ENCODE measurements at regions of chr11 and their contacts with region 1.

Region 1: DNA sequence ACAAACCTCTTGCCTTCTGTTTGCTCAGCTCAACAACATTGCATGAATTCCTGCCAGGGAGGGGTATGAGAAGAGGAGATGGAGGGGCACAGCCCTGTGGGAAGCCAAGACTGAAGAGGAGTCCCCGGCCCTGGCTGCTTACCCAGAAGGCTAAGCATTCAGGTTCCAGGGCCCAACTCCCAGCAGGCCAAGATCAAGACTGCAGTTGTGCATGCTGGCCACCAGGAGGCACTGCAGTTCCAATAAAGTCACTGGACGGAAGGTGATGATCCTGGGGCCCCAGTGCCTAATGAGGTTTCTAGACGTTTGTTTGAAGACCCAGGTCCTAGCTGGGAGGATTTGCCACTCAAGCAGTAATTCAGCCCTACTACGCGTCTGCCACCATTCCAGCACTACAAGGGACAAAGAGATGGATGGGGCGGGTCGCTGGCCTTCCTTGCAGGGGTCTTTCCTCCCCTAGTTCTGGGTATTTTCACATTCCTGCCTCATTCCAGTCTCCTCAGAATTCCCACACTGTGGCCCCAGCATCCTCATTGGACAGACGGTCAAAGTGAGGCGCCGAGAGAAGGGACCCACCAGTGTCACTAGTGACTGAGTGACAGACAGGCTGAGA is 23.6 kb downstream of the ALX4 start:
- DNase-seq: peak; percentile 85 to 86 (median 86)
- ATAC-seq: peak; percentile 94
- H3K4me3 ChIP-seq: no peak overlapping the region
- H3K27ac ChIP-seq: no peak overlapping the region
- H3K4me1 ChIP-seq: peaks cover 7 to 13% of the 10 kb centered on the region in 2 experiments; a peak in 4 of 5 replicates
- H3K27me3 ChIP-seq: no peaks in the 10 kb centered on the region
- CTCF ChIP-seq: peak; percentile 93 to 97 (median 95)
- EP300 ChIP-seq: no peak; the same call in 1 of the 2 replicates
- POLR2A ChIP-seq: no peak
- RAD21 ChIP-seq: peak; percentile 96 to 98

Region 2: DNA sequence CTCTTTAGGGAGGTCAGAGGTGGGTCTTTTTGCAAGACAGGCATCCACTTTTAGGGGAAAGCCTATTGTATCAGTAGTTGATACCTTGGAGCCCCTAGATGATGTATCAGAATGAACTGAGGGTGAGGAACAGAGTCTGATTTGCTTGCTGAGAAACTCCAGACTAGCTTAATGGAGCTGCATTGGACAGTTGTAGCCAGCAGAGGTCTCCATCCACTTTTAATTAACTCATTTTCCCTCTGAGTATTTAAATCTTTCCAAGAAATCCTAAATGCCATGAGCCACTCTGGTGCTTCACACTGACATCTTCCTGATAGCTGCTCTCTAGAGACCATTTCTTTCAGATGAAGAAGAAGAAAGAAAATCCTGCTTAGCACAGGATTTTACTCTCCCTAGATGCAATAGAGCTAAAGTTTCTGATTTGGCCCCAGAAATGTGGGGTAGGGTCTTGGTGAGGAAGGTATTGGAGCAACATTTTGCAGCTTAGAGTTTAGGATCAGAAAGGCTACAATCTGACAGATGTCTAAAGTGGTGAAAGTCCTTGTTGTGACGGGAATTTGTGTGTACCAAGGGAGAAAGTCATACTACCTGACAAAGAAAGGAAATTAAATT is 152.9 kb before region 1 on chr11:
- CTCF ChIA-PET with region 1: interaction called, 3 read pairs
- POLR2A ChIA-PET with region 1: no interaction called
- in situ Hi-C with region 1: no loop called
- intact Hi-C with region 1: loop called (anchors 5 kb)
- DNase-seq: peak; percentile 32 to 48 (median 36)
- ATAC-seq: peak; percentile 83
- H3K4me3 ChIP-seq: no peak overlapping the region
- H3K27ac ChIP-seq: no peak overlapping the region
- H3K4me1 ChIP-seq: peaks cover 0 to 2% of the 10 kb centered on the region in 2 experiments; a peak in 1 of 5 replicates
- H3K27me3 ChIP-seq: no peaks in the 10 kb centered on the region
- CTCF ChIP-seq: peak; percentile 43 to 76 (median 72)
- EP300 ChIP-seq: no peak
- POLR2A ChIP-seq: no peak
- RAD21 ChIP-seq: peak; percentile 73 to 81

Region 3: DNA sequence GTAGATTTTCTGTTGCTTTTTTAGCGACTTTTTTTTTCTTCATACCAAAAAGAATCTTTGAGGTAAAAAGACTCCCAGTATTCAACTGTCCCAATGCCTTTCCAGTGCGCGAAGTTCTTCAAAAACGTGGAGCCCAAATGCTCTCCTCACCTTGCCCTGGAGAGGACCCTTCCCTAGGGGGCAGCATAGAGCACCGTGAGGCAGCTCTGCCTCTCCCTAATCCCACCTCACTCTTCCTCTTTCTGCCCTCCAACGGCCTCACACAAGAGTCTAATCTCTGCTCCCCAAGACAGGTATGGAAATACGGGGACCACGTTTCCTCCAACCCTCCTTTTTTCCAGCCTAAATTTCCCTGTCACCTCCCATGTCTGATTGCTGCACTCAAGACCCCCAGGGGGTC is 141.1 kb after region 1 on chr11:
- CTCF ChIA-PET with region 1: no interaction called
- POLR2A ChIA-PET with region 1: no interaction called
- in situ Hi-C with region 1: no loop called
- intact Hi-C with region 1: loop called (anchors 10 kb)
- DNase-seq: peak; percentile 64 to 77 (median 72)
- ATAC-seq: peak; percentile 96
- H3K4me3 ChIP-seq: no peak overlapping the region
- H3K27ac ChIP-seq: no peak overlapping the region
- H3K4me1 ChIP-seq: no peaks in the 10 kb centered on the region; a peak in 1 of 5 replicates
- H3K27me3 ChIP-seq: peaks cover 29 to 42% of the 10 kb centered on the region in 2 experiments; a peak in 4 of 5 replicates
- CTCF ChIP-seq: peak; percentile 73 to 84 (median 78)
- EP300 ChIP-seq: no peak
- POLR2A ChIP-seq: no peak
- RAD21 ChIP-seq: peak; percentile 19 to 36; a peak in 3 of 4 replicates

Region 4: GRCh38 chr11:44538375-44539054 is 252.1 kb after region 1 on chr11:
- CTCF ChIA-PET with region 1: interaction called, 17 read pairs
- POLR2A ChIA-PET with region 1: interaction called, 5 read pairs
- in situ Hi-C with region 1: loop called (anchors 5 kb)
- intact Hi-C with region 1: loop called (anchors 1 kb)
- DNase-seq: peak; percentile 85 to 88 (median 87)
- ATAC-seq: peak; percentile 95
- H3K4me3 ChIP-seq: no peak overlapping the region
- H3K27ac ChIP-seq: no peak overlapping the region
- H3K4me1 ChIP-seq: peaks cover 16 to 29% of the 10 kb centered on the region in 2 experiments
- H3K27me3 ChIP-seq: no peaks in the 10 kb centered on the region
- CTCF ChIP-seq: peak; percentile 92 to 95 (median 95)
- EP300 ChIP-seq: no peak
- POLR2A ChIP-seq: no peak
- RAD21 ChIP-seq: peak; percentile 99

Region 5: GRCh38 chr11:44621140-44621681 is 334.8 kb after region 1 on chr11:
- CTCF ChIA-PET with region 1: interaction called, 10 read pairs
- POLR2A ChIA-PET with region 1: no interaction called
- in situ Hi-C with region 1: loop called (anchors 5 kb)
- intact Hi-C with region 1: loop called (anchors 2 kb)
- DNase-seq: peak; percentile 81 to 87 (median 84)
- ATAC-seq: peak; percentile 94
- H3K4me3 ChIP-seq: peak overlapping the region; percentile 14; the same call in 1 of the 2 replicates
- H3K27ac ChIP-seq: no peak overlapping the region
- H3K4me1 ChIP-seq: peaks cover 0 to 26% of the 10 kb centered on the region in 2 experiments; a peak in 3 of 5 replicates
- H3K27me3 ChIP-seq: peaks cover 0 to 19% of the 10 kb centered on the region in 2 experiments; a peak in 2 of 5 replicates
- CTCF ChIP-seq: peak; percentile 93 to 96 (median 94)
- EP300 ChIP-seq: no peak
- POLR2A ChIP-seq: no peak
- RAD21 ChIP-seq: peak; percentile 98